ENCODE measurements at regions of chr15 and their contacts with region 1.

Region 1: DNA sequence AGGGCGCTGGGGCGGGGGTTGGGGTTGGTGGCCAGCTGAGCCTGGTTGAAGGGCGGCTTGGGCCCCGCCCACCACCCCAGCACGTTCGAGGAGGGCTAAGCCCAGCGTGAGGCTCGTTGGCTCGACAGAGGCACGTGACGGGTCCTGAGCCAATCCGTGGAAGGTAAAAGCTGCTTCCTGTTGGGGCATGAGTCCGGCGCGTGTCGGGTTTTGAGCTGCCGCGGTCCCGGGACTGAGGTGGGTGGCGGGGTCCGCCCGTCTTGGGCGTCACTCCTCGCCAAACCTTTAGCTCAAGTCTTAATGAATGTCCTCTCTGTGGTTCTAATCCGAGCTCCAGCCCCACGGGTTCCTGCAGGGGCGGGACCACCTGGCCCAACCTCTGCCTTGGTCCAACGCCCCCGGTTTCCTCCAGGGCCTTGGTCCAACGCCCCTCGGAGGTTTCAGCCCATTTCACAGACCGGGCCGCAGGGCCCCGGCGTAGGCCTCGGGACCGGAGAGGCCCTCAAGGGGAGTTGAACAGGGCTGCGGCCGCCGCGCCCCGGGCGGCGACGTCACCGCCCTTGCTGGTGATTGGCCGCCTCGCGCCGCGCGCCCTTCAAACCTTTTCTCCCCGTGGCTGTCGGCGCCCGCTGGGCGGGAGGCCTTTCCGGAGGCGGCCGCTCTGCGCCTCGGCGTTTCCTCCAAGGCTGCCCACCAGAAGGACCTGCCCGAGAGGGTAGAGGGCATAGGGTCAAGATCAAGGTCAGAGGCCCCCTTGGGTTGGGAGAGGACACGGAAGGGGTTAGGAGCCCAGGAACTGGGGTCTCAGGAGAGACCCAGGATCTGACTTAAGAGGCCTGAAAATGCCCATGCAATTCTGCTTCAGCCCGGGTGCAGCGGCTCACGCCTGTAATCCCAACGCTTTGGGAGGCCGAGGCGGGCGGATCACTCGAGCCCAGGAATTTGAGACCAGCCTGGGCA is at the start of gene RCCD1:
- DNase-seq: peak; percentile 93 to 95
- ATAC-seq: peak; percentile 89 to 97 (median 96)
- H3K4me3 ChIP-seq: peak within 1 kb of the TSS; percentile 44 to 96 (median 80)
- H3K27ac ChIP-seq: peak within 1 kb of the TSS; percentile 15 to 97 (median 88)
- H3K4me1 ChIP-seq: peaks cover 0 to 43% (median 28%) of the 10 kb centered on the region in 9 donors
- H3K27me3 ChIP-seq: no peaks in the 10 kb centered on the region
- CTCF ChIP-seq: no peak
- total RNA-seq, gene RCCD1: 5.5 to 11.8 (median 7.6) TPM

Region 2: GRCh38 chr15:90994417-90995311 is 39.7 kb after region 1 on chr15 and contains the start of gene PRC1:
- intact Hi-C with region 1: loop called in 2 of 10 experiments (anchors 5 kb)
- DNase-seq: peak; percentile 98 to 99
- ATAC-seq: peak; percentile 100
- H3K4me3 ChIP-seq: peak within 1 kb of the TSS; percentile 63 to 96 (median 83)
- H3K27ac ChIP-seq: peak within 1 kb of the TSS; percentile 4 to 93 (median 81)
- H3K4me1 ChIP-seq: peaks cover 0 to 18% (median 5%) of the 10 kb centered on the region in 9 donors
- H3K27me3 ChIP-seq: no peaks in the 10 kb centered on the region
- CTCF ChIP-seq: no peak
- total RNA-seq, gene PRC1: 2.1 to 16.2 (median 4.4) TPM

Region 3: GRCh38 chr15:91032919-91033803 is 78.2 kb after region 1 on chr15:
- intact Hi-C with region 1: loop called in 6 of 10 experiments (anchors 2 to 10 kb)
- DNase-seq: peak; percentile 34 to 45
- ATAC-seq: peak in 1 of 8 donors; percentile 56
- H3K4me3 ChIP-seq: no peak overlapping the region
- H3K27ac ChIP-seq: no peak overlapping the region
- H3K4me1 ChIP-seq: peaks cover 0 to 4% (median 0%) of the 10 kb centered on the region in 9 donors
- H3K27me3 ChIP-seq: peaks cover 0 to 8% (median 0%) of the 10 kb centered on the region in 7 donors
- CTCF ChIP-seq: peak; percentile 18 to 65 (median 60)

Region 4: GRCh38 chr15:91049378-91050127 is 94.6 kb after region 1 on chr15:
- intact Hi-C with region 1: loop called in 8 of 10 experiments (anchors 1 to 5 kb)
- DNase-seq: peak in 1 of 2 donors; percentile 48
- ATAC-seq: peak; percentile 58 to 90 (median 86)
- H3K4me3 ChIP-seq: no peak overlapping the region
- H3K27ac ChIP-seq: no peak overlapping the region
- H3K4me1 ChIP-seq: peaks cover 0 to 12% (median 0%) of the 10 kb centered on the region in 9 donors
- H3K27me3 ChIP-seq: peaks cover 0 to 15% (median 6%) of the 10 kb centered on the region in 7 donors
- CTCF ChIP-seq: peak; percentile 32 to 74 (median 65)

Region 5: DNA sequence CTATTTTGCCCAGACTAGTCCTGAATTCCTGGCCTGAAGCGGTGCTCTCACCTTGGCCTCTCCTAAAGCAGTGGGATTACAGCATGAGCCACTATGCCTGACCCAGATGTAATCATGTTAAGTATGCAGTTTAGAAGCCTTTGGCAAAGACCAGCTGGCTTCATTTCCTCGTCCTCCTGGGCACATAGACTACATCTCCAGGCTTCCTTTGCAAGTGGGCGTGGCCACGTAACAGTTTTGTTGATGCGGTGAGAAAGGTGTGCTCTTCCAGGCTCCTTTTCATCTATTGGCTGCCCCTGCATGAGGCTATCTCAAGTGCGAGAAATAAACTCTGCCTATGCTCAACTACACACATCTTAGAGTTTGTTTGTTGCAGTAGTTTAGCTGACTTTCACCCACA is 158.0 kb after region 1 on chr15:
- intact Hi-C with region 1: no loop called
- DNase-seq: no peak
- ATAC-seq: no peak
- H3K4me3 ChIP-seq: no peak overlapping the region
- H3K27ac ChIP-seq: no peak overlapping the region
- H3K4me1 ChIP-seq: peaks cover 0 to 34% (median 15%) of the 10 kb centered on the region in 9 donors
- H3K27me3 ChIP-seq: peaks cover 0 to 6% (median 0%) of the 10 kb centered on the region in 7 donors
- CTCF ChIP-seq: no peak

Region 6: DNA sequence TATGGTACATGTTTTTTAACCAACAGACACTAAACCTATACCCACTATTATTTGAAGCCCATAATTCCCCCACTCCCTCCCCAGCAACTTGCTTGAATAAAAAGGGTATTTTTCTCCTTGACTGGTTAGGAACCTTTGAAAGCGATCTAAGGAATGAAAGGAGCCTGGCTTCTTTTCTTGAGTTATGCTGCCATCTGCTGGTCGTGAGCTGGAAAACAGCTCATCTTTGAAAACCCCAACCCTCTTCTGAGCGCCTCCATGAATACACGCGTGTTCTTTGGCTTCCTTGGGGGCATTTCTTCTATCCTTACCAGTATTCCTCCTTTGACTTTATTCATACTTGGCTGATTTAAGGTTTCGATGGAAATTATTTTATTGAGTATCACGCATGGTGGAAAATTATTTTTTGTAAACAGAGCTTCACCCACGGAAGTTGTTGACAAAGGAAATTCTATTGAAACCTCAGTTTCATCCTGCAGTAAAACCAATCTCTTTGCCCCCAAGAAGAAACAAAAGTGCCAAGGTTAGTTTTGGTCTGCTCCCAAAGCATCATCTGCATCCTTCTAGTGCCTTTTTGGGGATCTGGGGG is 316.7 kb after region 1 on chr15:
- intact Hi-C with region 1: loop called in 9 of 10 experiments (anchors 1 to 10 kb)
- DNase-seq: peak in 1 of 2 donors; percentile 38
- ATAC-seq: peak in 7 of 8 donors; percentile 63 to 84 (median 77)
- H3K4me3 ChIP-seq: no peak overlapping the region
- H3K27ac ChIP-seq: no peak overlapping the region
- H3K4me1 ChIP-seq: peaks cover 0 to 7% (median 0%) of the 10 kb centered on the region in 9 donors
- H3K27me3 ChIP-seq: peaks cover 0 to 19% (median 0%) of the 10 kb centered on the region in 7 donors
- CTCF ChIP-seq: peak; percentile 50 to 91 (median 84)

Region 7: DNA sequence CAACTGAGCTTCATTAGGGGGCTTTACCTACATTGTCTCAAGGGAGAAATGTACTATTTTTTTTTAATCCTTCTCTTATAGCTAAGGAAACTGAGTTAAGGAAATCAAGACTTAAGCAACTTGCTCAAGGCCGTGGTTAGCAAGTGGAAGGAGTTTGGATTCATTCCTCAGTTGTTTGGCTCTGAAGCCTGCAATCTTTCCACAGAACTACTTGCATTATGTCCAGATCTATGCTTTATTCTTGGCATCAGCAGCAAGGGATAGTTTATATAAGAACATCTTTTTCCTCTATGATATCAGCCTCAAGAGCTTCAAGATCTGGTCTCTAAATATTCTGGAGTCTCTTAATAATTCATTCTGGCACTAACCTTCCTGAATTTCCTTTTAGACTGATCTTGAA is 327.5 kb after region 1 on chr15:
- intact Hi-C with region 1: no loop called
- DNase-seq: no peak
- ATAC-seq: no peak
- H3K4me3 ChIP-seq: no peak overlapping the region
- H3K27ac ChIP-seq: no peak overlapping the region
- H3K4me1 ChIP-seq: no peaks in the 10 kb centered on the region
- H3K27me3 ChIP-seq: no peaks in the 10 kb centered on the region
- CTCF ChIP-seq: no peak